Left cardiac atrium (tissue), 4 donors: ENCODE measurements at regions of chr7 and their contacts with region 1.

Region 1: GRCh38 chr7:22001345-22002004 is 55.8 kb upstream of the CDCA7L start:
- DNase-seq: no peak
- ATAC-seq: peak; percentile 74 to 87

Region 2: DNA sequence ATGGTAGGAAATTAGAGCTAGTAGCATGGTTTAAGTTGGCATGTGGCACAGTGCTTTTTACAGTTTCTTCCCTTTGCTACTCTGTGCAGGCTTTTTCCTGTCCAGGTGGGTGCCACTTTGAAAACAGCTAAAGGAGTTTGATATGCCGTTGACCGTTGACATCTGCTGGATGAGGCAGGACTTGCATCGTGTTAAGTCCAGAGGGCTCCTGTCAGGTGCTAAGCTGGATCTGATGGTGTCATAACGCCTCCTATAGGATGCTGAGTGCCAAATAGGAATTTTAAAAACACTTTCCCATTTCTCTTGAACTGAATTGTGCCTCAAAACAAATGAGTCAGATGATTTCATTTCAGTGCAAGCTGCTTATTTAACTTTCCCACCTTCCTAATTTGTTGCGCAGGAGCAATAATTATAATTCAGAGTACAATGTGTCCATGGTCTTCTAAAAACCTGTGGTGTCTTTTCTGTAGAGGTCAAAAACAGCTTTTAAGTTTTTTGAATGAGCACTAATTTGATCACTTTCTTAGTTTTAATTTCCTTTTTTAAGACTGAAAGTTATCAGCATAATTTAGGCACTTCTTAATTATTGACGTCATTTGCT is 234.1 kb before region 1 on chr7:
- intact Hi-C with region 1: loop called in 1 of 2 experiments (anchors 10 kb)
- DNase-seq: peak; percentile 28
- ATAC-seq: peak; percentile 78 to 92

Region 3: DNA sequence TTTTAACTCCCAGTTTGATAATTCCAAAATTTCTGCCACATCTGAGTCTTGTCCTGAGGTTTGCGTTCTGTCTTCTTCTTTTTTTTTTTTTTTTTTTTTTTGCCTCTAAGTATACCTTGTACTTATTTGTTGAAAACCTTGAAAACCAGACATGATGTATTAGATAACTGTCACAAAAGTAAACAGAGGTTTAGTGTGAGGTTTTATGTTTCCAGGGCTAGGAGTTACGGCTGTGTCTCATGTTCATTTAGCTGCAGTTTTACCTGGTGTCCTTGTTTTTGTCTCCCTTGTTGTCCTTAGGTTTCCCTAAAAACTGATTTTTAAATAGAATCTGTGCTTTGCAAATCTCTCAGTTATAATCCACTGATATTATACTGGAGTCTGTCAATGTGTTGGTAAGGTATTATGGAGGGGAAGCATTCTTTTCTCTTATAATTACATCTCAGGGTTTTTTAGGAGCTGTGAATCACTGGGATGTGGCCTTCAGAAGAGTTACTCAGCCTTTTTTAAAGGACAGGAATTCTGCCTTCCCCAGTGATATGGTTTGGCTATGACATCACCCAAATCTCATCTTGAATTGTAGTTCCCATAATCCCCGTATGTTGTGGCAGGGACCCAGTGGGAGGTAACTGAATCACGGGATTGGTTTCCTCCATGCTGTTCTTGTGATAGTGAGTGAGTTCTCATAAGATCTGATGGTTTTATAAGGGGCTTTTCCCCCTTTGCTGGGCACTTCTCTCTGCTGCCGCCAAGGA is 150.8 kb before region 1 on chr7:
- intact Hi-C with region 1: loop called in 1 of 2 experiments (anchors 10 kb)
- DNase-seq: no peak
- ATAC-seq: no peak

Region 4: DNA sequence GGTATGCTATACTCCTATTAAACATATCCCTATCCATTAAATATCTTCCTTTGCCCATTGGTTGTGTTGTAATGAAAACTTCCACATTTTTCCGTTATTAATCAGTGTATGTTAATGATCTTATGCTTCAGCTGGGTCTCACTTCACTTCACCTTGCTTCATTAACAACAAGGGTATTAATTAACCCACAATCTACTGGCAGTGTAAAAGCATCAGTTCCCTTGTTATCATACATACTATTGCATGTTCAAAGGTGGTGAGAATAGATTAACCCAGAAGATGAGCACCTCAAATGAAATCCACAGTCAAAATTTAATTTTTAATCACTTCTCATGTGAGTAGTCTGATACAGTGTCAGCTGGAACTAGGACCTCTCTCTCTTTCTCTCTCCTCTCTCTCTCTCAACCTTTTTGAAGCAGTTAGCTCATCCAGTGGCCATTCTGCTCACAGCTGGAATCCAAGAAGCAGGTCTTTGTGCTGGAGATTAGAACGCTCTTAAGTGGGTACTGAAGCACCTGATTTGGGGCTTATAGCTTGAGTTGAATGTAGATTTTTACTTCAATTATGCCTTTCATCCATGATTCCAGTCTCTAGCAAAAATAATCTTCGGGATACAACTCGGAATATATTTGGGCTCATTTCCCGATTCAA is 183.2 kb after region 1 on chr7:
- intact Hi-C with region 1: no loop called
- DNase-seq: no peak
- ATAC-seq: no peak